ENCODE measurements at regions of chr2 and their contacts with region 1.

Region 1: GRCh38 chr2:130241041-130241707 is 42.9 kb upstream of the TUBA3E start:
- DNase-seq: peak; percentile 95
- ATAC-seq: peak; percentile 100
- H3K4me3 ChIP-seq: no peak overlapping the region
- H3K27ac ChIP-seq: 0 out of 2 replicates have a peak overlapping the region, but pooled peaks have one; percentile 2
- H3K4me1 ChIP-seq: peaks cover 10% of the 10 kb centered on the region
- H3K27me3 ChIP-seq: no peaks in the 10 kb centered on the region
- CTCF ChIP-seq: no peak

Region 2: DNA sequence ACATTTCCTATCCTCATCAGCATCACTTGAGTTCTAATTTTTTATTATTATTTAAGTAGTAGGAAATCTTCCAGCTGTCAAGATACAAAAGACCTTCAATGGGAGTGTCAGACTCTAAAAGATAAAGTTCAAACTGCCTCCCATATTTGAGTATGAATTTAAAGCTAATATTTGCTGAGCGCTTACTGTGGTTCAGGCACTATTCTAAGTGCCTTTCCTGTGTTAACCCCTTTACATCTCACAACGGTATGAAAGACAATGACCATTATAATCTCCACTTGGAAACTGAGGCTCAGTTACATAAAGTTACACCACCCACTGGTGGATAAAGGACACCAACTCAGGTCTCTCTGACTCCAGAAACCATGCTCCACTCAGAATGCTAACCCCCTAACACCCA is 221.8 kb before region 1 on chr2:
- CTCF ChIA-PET with region 1: interaction called, 13 read pairs
- POLR2A ChIA-PET with region 1: no interaction called
- intact Hi-C with region 1: no loop called
- DNase-seq: no peak
- ATAC-seq: no peak
- H3K4me3 ChIP-seq: no peak overlapping the region
- H3K27ac ChIP-seq: no peak overlapping the region
- H3K4me1 ChIP-seq: no peaks in the 10 kb centered on the region
- H3K27me3 ChIP-seq: no peaks in the 10 kb centered on the region; the same call in 1 of the 2 replicates
- CTCF ChIP-seq: no peak

Region 3: GRCh38 chr2:130181325-130181879 is 59.8 kb before region 1 on chr2 and contains the start of gene SMPD4:
- CTCF ChIA-PET with region 1: no interaction called
- POLR2A ChIA-PET with region 1: interaction called, 6 read pairs
- intact Hi-C with region 1: loop called (anchors 1 kb)
- DNase-seq: peak; percentile 93
- ATAC-seq: peak; percentile 58
- H3K4me3 ChIP-seq: peak within 1 kb of the TSS; percentile 95
- H3K27ac ChIP-seq: peak within 1 kb of the TSS; percentile 69
- H3K4me1 ChIP-seq: peaks cover 13% of the 10 kb centered on the region
- H3K27me3 ChIP-seq: no peaks in the 10 kb centered on the region
- CTCF ChIP-seq: no peak
- total RNA-seq, gene SMPD4: 64.4 and 82.2 TPM in 2 replicates

Region 4: DNA sequence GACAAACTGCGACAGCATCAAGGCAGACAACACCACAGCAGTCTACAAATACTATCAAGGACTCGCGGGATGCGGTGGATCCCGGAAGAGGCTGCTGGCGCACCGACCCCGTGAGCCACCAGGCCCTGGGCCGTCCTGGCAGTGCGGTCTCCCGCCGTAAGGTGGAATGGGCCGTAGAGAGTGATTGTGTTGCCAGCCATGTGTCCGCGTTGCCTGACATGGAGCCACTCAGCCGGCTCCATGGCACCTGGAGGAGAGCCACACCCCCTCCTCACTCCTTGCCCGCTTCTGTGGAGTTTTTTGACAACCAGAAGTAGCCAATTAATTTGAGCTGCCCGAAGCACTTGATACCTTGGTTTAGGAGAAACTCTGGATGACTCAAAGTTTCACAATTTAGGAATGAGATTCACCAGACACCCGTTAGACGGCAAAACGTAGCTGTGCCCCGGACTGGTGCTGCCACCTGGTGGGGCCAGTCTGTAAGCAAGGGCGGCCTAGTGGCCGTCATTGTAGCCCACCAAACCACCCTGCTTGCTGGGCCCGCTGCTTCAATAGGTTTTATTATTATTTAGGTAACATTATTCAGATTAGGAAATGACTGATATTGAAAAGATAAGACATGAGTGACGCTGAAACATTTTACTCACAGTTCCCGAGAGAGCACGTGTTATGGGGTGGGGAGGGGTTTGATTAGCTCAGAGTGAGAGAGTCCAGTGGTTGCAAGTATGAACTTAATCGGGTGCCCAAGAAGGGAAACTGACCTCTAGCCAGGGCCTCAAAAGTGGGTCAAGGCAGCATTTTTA is 91.3 kb after region 1 on chr2:
- CTCF ChIA-PET with region 1: no interaction called
- POLR2A ChIA-PET with region 1: interaction called, 9 read pairs
- intact Hi-C with region 1: loop called (anchors 1 kb)
- DNase-seq: peak; percentile 84
- ATAC-seq: peak; percentile 56
- H3K4me3 ChIP-seq: peak overlapping the region; percentile 49
- H3K27ac ChIP-seq: no peak overlapping the region
- H3K4me1 ChIP-seq: peaks cover 18% of the 10 kb centered on the region
- H3K27me3 ChIP-seq: peaks cover 8% of the 10 kb centered on the region
- CTCF ChIP-seq: peak; percentile 98